CD8-positive, alpha-beta memory T cell (primary cell): ENCODE measurements at regions of chr16 and their contacts with region 1.

Region 1: DNA sequence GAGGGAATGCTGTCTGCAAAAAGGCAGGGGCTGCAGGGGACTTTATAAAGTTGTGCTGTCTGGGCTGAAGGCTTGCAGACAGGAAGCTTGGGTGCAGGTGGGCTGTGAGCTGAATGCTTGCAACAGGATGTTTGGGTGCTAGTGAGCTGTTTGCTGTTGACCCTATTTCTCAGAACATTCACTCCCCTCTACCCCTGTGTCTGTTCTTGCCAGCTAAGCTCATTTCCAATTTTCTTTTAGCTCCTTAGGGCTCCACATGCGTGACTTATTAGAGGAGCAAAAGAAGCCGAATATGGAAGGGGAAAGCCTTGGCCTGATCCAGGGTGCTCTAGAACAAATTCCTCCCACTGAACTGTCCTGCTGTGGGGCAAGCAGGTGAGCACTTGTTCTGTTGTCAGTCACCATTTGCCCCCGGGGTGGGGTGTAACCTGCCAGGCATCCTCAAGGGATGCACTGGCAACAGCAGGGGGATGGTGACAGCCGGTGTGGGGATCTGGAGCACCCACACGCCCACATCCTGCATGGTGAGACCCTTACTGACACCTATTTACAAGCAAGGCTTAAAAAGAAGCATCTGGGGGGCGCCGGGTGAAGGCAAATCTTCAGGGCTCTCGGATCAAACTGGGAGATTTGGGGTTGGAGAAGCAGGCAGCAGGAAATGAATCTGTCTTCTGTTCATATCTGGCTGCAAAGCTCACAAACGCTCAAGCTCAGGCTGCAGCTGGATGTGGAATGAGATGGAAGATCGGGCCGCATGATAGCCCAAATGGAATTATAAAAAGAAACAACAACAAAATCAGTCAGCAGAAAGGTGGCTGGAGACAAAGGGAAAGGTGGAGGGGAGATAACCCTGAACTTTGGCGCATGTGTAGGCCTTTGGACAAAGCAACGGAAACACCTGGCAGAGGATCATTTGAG is 21.1 kb upstream of the NUP93 start:
- DNase-seq: peak; percentile 11 to 67 (median 39)
- H3K4me3 ChIP-seq: peak overlapping the region; percentile 56
- H3K4me3 Mint-ChIP-seq: peak overlapping the region; percentile 86 to 94 (median 88)
- H3K27ac ChIP-seq: peak overlapping the region; percentile 30
- H3K27ac Mint-ChIP-seq: peak overlapping the region; percentile 88 to 97 (median 94)
- H3K4me1 ChIP-seq: peaks cover 29% of the 10 kb centered on the region
- H3K4me1 Mint-ChIP-seq: peaks cover 37 to 54% (median 52%) of the 10 kb centered on the region in 3 donors
- H3K27me3 ChIP-seq: no peaks in the 10 kb centered on the region
- H3K27me3 Mint-ChIP-seq: no peaks in the 10 kb centered on the region

Region 2: DNA sequence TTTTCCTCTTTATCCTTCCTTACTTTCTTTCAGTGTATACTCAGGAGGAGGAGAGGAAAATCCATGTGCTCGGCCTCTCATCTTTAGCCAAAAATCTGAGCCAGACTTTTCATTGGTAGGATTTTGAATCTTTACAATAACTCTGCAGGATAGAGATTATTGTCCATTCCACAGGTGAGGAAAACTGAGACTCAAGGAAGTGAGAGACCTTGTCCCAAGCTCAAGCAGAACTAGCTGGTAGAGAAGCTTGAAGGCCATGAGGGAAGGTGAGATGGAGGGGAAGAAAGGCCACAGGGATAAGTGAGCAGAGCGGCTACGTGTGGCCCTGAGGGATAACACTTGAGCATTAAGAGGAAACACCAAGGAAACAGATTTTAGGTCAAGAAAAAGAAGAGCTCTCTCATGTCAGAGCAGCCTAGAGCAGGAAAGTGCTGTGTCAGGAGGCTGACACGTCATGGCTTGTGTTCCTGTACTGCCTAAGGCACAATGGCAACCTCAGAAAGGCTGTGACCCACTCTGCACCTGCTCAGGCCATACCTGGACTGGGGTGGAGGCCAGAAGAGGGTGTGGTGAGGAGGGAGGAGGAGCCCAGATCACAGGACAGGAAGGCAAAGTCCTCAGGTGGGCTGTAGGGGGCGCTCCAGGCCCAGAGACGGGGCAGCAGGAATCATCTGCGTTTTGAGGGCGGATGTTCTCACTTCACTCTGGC is 132.0 kb before region 1 on chr16:
- CTCF ChIA-PET with region 1: interaction called, 65 read pairs
- POLR2A ChIA-PET with region 1: no interaction called
- DNase-seq: peak; percentile 82 to 90 (median 87)
- H3K4me3 ChIP-seq: no peak overlapping the region
- H3K4me3 Mint-ChIP-seq: no peak overlapping the region
- H3K27ac ChIP-seq: no peak overlapping the region
- H3K27ac Mint-ChIP-seq: peak overlapping the region in 7 of 8 donors; percentile 6 to 94 (median 41)
- H3K4me1 ChIP-seq: peaks cover 4% of the 10 kb centered on the region
- H3K4me1 Mint-ChIP-seq: peaks cover 4 to 8% (median 7%) of the 10 kb centered on the region in 3 donors
- H3K27me3 ChIP-seq: no peaks in the 10 kb centered on the region
- H3K27me3 Mint-ChIP-seq: peaks cover 0 to 2% of the 10 kb centered on the region in 2 donors

Region 3: GRCh38 chr16:56667581-56668571 is 40.9 kb before region 1 on chr16 and contains the start of gene MT1G:
- CTCF ChIA-PET with region 1: no interaction called
- POLR2A ChIA-PET with region 1: no interaction called
- DNase-seq: no peak
- H3K4me3 ChIP-seq: no peak within 1 kb of the TSS
- H3K4me3 Mint-ChIP-seq: peak within 1 kb of the TSS in 4 of 7 donors; percentile 5 to 40 (median 38)
- H3K27ac ChIP-seq: no peak within 1 kb of the TSS
- H3K27ac Mint-ChIP-seq: peak within 1 kb of the TSS in 1 of 8 donors; percentile 43
- H3K4me1 ChIP-seq: peaks cover 13% of the 10 kb centered on the region
- H3K4me1 Mint-ChIP-seq: peaks cover 16 to 32% (median 18%) of the 10 kb centered on the region in 3 donors
- H3K27me3 ChIP-seq: peaks cover 40% of the 10 kb centered on the region
- H3K27me3 Mint-ChIP-seq: peaks cover 39 to 62% of the 10 kb centered on the region in 2 donors
- total RNA-seq, gene MT1G: 41.0 to 46.8 TPM